Activated CD4-positive, alpha-beta memory T cell treated with anti-CD3 and anti-CD28 coated beads for 36 hours (primary cell): ENCODE measurements at regions of chr15 and their contacts with region 1.

Region 1: DNA sequence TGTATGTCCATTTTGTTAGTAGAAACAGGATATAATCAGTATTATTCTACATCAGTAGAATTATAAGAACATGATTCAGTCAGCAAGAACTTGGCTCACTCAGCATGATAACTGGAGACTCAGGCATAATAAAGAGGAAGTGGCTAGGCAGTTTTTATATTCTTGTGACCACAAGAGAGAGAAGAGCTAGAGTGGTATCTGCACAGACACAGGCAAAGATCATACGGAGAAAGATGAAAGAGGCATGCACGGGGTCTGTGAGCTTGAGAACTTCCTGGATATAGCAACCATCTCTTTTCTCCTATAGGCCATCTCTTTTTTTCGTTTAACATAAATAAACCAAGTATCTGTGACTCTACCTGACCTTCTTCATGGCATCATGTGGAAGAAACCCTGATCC is 46.8 kb downstream of the MYO5A start:
- DNase-seq: peak; percentile 60
- H3K4me3 Mint-ChIP-seq: no peak overlapping the region
- H3K27ac Mint-ChIP-seq: peak overlapping the region; percentile 53
- H3K4me1 Mint-ChIP-seq: peaks cover 67% of the 10 kb centered on the region
- H3K27me3 Mint-ChIP-seq: no peaks in the 10 kb centered on the region

Region 2: GRCh38 chr15:51869070-51869425 is 612.9 kb before region 1 on chr15:
- CTCF ChIA-PET with region 1: no interaction called
- POLR2A ChIA-PET with region 1: no interaction called
- intact Hi-C with region 1: no loop called
- DNase-seq: no peak
- H3K4me3 Mint-ChIP-seq: no peak overlapping the region
- H3K27ac Mint-ChIP-seq: no peak overlapping the region
- H3K4me1 Mint-ChIP-seq: peaks cover 16% of the 10 kb centered on the region
- H3K27me3 Mint-ChIP-seq: no peaks in the 10 kb centered on the region

Region 3: GRCh38 chr15:52496776-52497470 is 15.0 kb after region 1 on chr15:
- CTCF ChIA-PET with region 1: interaction called, 3 read pairs
- POLR2A ChIA-PET with region 1: interaction called, 9 read pairs
- intact Hi-C with region 1: loop called (anchors 2 kb)
- DNase-seq: peak; percentile 78
- H3K4me3 Mint-ChIP-seq: no peak overlapping the region
- H3K27ac Mint-ChIP-seq: no peak overlapping the region
- H3K4me1 Mint-ChIP-seq: peaks cover 18% of the 10 kb centered on the region
- H3K27me3 Mint-ChIP-seq: no peaks in the 10 kb centered on the region

Region 4: DNA sequence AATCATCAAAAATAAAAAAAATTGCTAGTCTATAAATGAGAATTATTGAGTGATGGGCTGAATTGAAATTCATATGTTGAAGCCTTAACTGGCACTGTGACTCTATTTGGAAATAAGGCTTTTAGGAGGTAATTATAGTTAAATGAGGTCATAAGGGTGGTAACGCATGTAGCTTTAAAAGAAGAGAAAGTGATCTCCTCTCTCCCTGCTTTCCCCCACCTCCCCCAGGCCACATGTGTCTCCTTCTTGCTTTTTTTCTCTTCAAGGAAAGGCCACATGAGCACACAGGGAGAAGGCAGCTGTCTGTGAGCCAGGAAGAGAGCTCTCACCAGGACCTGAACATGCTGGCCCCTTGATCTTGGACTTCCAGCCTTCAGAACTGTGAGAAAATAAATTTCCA is 135.1 kb after region 1 on chr15:
- CTCF ChIA-PET with region 1: no interaction called
- POLR2A ChIA-PET with region 1: no interaction called
- intact Hi-C with region 1: no loop called
- DNase-seq: no peak
- H3K4me3 Mint-ChIP-seq: no peak overlapping the region
- H3K27ac Mint-ChIP-seq: no peak overlapping the region
- H3K4me1 Mint-ChIP-seq: no peaks in the 10 kb centered on the region
- H3K27me3 Mint-ChIP-seq: no peaks in the 10 kb centered on the region

Region 5: GRCh38 chr15:52658955-52659354 is 177.0 kb after region 1 on chr15:
- CTCF ChIA-PET with region 1: no interaction called
- POLR2A ChIA-PET with region 1: no interaction called
- intact Hi-C with region 1: loop called (anchors 5 kb)
- DNase-seq: peak; percentile 64
- H3K4me3 Mint-ChIP-seq: no peak overlapping the region
- H3K27ac Mint-ChIP-seq: peak overlapping the region; percentile 12
- H3K4me1 Mint-ChIP-seq: peaks cover 30% of the 10 kb centered on the region
- H3K27me3 Mint-ChIP-seq: no peaks in the 10 kb centered on the region